Esophagus muscularis mucosa (tissue), 4 donors: ENCODE measurements at regions of chr13 and their contacts with region 1.

Region 1: DNA sequence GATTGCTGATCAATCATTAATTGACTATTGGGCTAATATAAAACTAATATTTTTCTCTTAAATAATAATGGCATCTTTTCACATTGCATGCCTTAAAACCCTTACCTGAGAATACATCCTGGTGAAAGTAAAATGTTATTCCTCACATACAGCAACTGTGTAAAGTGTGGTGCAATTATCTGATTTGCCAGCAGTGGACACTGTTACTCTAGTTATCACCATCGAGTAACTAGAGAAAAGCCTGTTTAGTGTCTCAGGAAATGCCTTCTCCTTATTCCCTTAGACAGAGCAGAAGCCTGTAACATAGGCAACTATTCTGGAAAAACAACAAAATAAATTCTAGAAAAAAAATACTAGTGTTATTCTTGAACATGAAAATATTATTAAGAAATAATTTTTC is 459.8 kb downstream of the FGF14 start:
- DNase-seq: no peak
- H3K4me3 ChIP-seq: no peak overlapping the region
- H3K27ac ChIP-seq: no peak overlapping the region
- H3K4me1 ChIP-seq: peaks cover 0 to 9% (median 2%) of the 10 kb centered on the region in 4 donors
- H3K27me3 ChIP-seq: no peaks in the 10 kb centered on the region
- CTCF ChIP-seq: peak; percentile 65 to 74 (median 72)
- EP300 ChIP-seq: no peak
- POLR2A ChIP-seq: no peak

Region 2: GRCh38 chr13:102550507-102550906 is 608.5 kb after region 1 on chr13:
- intact Hi-C with region 1: loop called (anchors 5 kb)
- DNase-seq: no peak
- H3K4me3 ChIP-seq: no peak overlapping the region
- H3K27ac ChIP-seq: no peak overlapping the region
- H3K4me1 ChIP-seq: no peaks in the 10 kb centered on the region
- H3K27me3 ChIP-seq: no peaks in the 10 kb centered on the region
- CTCF ChIP-seq: no peak
- EP300 ChIP-seq: no peak
- POLR2A ChIP-seq: no peak